ENCODE measurements at regions of chr3 and their contacts with region 1.

Region 1: DNA sequence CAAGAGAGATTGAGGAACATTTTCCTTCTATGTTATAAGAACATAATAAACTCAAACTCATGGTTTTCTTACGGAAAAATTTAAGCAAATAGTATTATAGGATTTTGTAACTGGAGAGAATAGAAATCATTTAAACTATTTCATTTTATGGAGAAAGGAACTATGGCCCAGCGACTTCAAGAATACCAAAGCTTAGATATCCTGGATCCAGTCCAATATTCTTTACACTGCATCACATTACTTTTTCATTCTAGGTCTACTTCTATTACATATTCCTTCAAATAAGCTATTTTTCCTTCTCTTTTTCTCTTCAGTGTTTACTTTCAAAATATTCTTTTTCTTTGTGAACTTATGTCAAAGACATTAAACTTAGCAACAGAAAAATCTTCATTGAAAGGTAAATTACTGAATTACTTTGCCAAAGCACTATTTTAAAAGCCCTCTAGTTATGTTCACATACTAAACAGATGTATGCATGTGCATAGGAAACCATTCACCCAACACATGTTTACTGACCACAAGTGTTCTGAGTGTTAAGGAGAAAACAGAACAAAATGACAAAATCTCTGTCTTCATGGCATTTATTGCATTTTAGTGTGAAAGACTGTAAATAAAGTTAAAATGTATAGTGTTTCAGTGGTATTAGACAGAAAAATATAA is 20.4 kb downstream of the KPNA4 start:
- DNase-seq: no peak
- H3K4me3 ChIP-seq: no peak overlapping the region
- H3K27ac ChIP-seq: no peak overlapping the region
- H3K4me1 ChIP-seq: peaks cover 0 to 18% (median 2%) of the 10 kb centered on the region in 4 donors
- H3K27me3 ChIP-seq: no peaks in the 10 kb centered on the region
- CTCF ChIP-seq: no peak
- EP300 ChIP-seq: no peak
- POLR2A ChIP-seq: no peak

Region 2: DNA sequence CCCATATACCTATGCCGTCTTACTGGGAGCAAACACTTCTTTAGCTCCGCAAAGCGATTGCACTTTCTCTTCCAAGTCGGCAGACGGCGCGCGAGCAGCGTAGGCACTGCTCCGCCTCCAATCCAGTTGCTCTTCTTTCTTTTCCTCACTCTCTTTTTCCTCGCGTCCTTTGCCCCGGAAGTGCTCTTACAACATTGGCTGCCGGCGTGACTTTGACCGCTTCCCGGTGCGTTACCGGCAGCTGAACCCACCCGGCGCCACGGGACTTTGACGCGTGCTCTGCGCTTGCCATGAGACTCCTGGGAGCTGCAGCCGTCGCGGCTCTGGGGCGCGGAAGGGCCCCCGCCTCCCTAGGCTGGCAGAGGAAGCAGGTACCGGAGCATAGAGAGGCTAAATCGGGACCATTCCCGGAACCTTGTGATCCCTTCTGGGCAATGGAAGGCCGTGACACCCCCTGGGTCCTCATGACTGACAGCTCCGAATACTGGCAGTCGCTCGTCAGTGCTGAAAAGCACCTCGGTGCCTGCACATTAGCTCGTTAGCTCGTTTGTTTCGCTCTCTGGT is 1900.5 kb before region 1 on chr3 and contains the start of gene GFM1:
- in situ Hi-C with region 1: no loop called
- intact Hi-C with region 1: loop called (anchors 10 kb)
- DNase-seq: peak; percentile 94
- H3K4me3 ChIP-seq: peak within 1 kb of the TSS; percentile 66 to 83 (median 80)
- H3K27ac ChIP-seq: peak within 1 kb of the TSS; percentile 79 to 89 (median 88)
- H3K4me1 ChIP-seq: peaks cover 4 to 21% (median 6%) of the 10 kb centered on the region in 4 donors
- H3K27me3 ChIP-seq: no peaks in the 10 kb centered on the region
- CTCF ChIP-seq: peak; percentile 71 to 87 (median 77)
- EP300 ChIP-seq: no peak
- POLR2A ChIP-seq: peak; percentile 65
- total RNA-seq, gene GFM1: 26.2 to 71.2 (median 47.9) TPM

Region 3: GRCh38 chr3:160312014-160312624 is 232.9 kb before region 1 on chr3:
- in situ Hi-C with region 1: no loop called
- intact Hi-C with region 1: no loop called
- DNase-seq: no peak
- H3K4me3 ChIP-seq: no peak overlapping the region
- H3K27ac ChIP-seq: no peak overlapping the region
- H3K4me1 ChIP-seq: no peaks in the 10 kb centered on the region
- H3K27me3 ChIP-seq: no peaks in the 10 kb centered on the region
- CTCF ChIP-seq: no peak
- EP300 ChIP-seq: no peak
- POLR2A ChIP-seq: no peak

Region 4: GRCh38 chr3:161230621-161231171 is 685.7 kb after region 1 on chr3:
- in situ Hi-C with region 1: loop called in 1 of 4 experiments (anchors 25 kb)
- intact Hi-C with region 1: no loop called
- DNase-seq: no peak
- H3K4me3 ChIP-seq: no peak overlapping the region
- H3K27ac ChIP-seq: no peak overlapping the region
- H3K4me1 ChIP-seq: peaks cover 0 to 4% (median 0%) of the 10 kb centered on the region in 4 donors
- H3K27me3 ChIP-seq: no peaks in the 10 kb centered on the region
- CTCF ChIP-seq: no peak
- EP300 ChIP-seq: no peak
- POLR2A ChIP-seq: no peak

Measured in transverse colon (tissue), 4 donors.